ENCODE measurements at regions of chr14 and their contacts with region 1.

Region 1: GRCh38 chr14:71138448-71139293 is 231.4 kb downstream of the PCNX1 start:
- DNase-seq: peak; percentile 67
- H3K4me3 Mint-ChIP-seq: no peak overlapping the region
- H3K27ac Mint-ChIP-seq: no peak overlapping the region
- H3K4me1 Mint-ChIP-seq: peaks cover 17% of the 10 kb centered on the region
- H3K27me3 Mint-ChIP-seq: no peaks in the 10 kb centered on the region

Region 2: DNA sequence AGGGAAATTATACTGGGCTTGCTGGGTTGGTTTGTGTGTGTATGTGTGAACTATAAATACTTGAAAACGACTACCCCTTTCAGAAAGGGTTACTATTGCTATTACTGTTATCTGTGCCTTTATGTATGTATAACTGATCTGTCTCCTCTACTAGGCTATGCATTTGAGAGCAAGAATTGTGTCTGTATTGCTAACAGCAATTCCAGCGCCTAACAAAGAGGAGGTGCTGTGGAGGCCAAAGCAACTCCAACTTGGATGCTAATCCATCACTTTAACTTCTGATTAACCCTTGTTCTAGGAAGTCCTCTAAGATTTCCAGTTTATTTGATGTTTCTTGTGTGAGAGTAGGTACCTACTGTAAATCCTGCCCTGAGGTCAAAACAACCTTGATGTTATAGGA is 82.4 kb after region 1 on chr14:
- CTCF ChIA-PET with region 1: no interaction called
- intact Hi-C with region 1: loop called (anchors 2 kb)
- DNase-seq: no peak
- H3K4me3 Mint-ChIP-seq: no peak overlapping the region
- H3K27ac Mint-ChIP-seq: no peak overlapping the region
- H3K4me1 Mint-ChIP-seq: peaks cover 16% of the 10 kb centered on the region
- H3K27me3 Mint-ChIP-seq: no peaks in the 10 kb centered on the region

Region 3: DNA sequence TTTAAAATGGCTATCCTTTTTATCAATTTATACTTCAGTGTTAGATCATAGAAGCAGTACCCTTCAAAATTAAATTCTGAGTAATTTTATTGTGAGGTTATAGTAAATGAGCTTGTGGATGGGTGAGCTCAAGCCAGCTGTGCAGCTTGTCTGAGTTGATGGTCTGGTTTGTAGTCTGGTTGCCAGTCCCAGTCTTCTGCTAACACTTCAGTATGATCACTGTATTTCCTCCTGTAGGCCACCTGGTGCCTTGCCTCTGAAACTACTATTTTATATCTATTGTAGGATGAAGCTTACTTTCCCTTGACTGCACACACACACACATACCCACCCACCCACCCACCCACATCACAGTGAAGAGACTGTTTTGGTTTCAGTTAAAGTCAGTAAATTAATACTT is 265.0 kb after region 1 on chr14:
- CTCF ChIA-PET with region 1: interaction called, 5 read pairs
- intact Hi-C with region 1: loop called (anchors 2 kb)
- DNase-seq: peak; percentile 31
- H3K4me3 Mint-ChIP-seq: no peak overlapping the region
- H3K27ac Mint-ChIP-seq: no peak overlapping the region
- H3K4me1 Mint-ChIP-seq: peaks cover 29% of the 10 kb centered on the region
- H3K27me3 Mint-ChIP-seq: no peaks in the 10 kb centered on the region

Region 4: GRCh38 chr14:71855399-71856036 is 716.8 kb after region 1 on chr14:
- CTCF ChIA-PET with region 1: interaction called, 11 read pairs
- intact Hi-C with region 1: loop called (anchors 1 kb)
- DNase-seq: peak; percentile 76
- H3K4me3 Mint-ChIP-seq: no peak overlapping the region
- H3K27ac Mint-ChIP-seq: no peak overlapping the region
- H3K4me1 Mint-ChIP-seq: peaks cover 4% of the 10 kb centered on the region
- H3K27me3 Mint-ChIP-seq: peaks cover 48% of the 10 kb centered on the region

Measured in activated naive CD4-positive, alpha-beta T cell treated with anti-CD3 and anti-CD28 coated beads for 36 hours (primary cell).